GM23248 (cell line): ENCODE measurements at regions of chr3 and their contacts with region 1.

Region 1: GRCh38 chr3:19357947-19358346 is 209.6 kb downstream of the KCNH8 start:
- DNase-seq: no peak
- H3K4me3 ChIP-seq: no peak overlapping the region
- H3K27ac ChIP-seq: no peak overlapping the region
- H3K4me1 ChIP-seq: no peaks in the 10 kb centered on the region
- H3K27me3 ChIP-seq: no peaks in the 10 kb centered on the region

Region 2: GRCh38 chr3:19250959-19251610 is 106.9 kb before region 1 on chr3:
- in situ Hi-C with region 1: no loop called
- DNase-seq: no peak
- H3K4me3 ChIP-seq: no peak overlapping the region
- H3K27ac ChIP-seq: no peak overlapping the region
- H3K4me1 ChIP-seq: no peaks in the 10 kb centered on the region
- H3K27me3 ChIP-seq: no peaks in the 10 kb centered on the region

Region 3: GRCh38 chr3:19547665-19548464 is 189.9 kb after region 1 on chr3:
- in situ Hi-C with region 1: no loop called
- DNase-seq: no peak
- H3K4me3 ChIP-seq: no peak overlapping the region
- H3K27ac ChIP-seq: no peak overlapping the region
- H3K4me1 ChIP-seq: no peaks in the 10 kb centered on the region
- H3K27me3 ChIP-seq: no peaks in the 10 kb centered on the region

Region 4: GRCh38 chr3:19866751-19867347 is 508.9 kb after region 1 on chr3:
- in situ Hi-C with region 1: loop called (anchors 10 kb)
- DNase-seq: peak; percentile 62
- H3K4me3 ChIP-seq: no peak overlapping the region
- H3K27ac ChIP-seq: no peak overlapping the region
- H3K4me1 ChIP-seq: no peaks in the 10 kb centered on the region
- H3K27me3 ChIP-seq: no peaks in the 10 kb centered on the region